ENCODE measurements at regions of chr1 and their contacts with region 1.

Region 1: GRCh38 chr1:156813750-156814570 is 2.7 kb downstream of the SH2D2A start:
- DNase-seq: peak; percentile 65
- H3K4me3 Mint-ChIP-seq: peak overlapping the region; percentile 73
- H3K27ac Mint-ChIP-seq: peak overlapping the region; percentile 27
- H3K4me1 Mint-ChIP-seq: peaks cover 48% of the 10 kb centered on the region
- H3K27me3 Mint-ChIP-seq: no peaks in the 10 kb centered on the region
- CTCF ChIP-seq: peak; percentile 55

Region 2: GRCh38 chr1:156833603-156834002 is 19.6 kb after region 1 on chr1:
- CTCF ChIA-PET with region 1: interaction called, 45 read pairs
- POLR2A ChIA-PET with region 1: interaction called, 3 read pairs
- intact Hi-C with region 1: no loop called
- DNase-seq: no peak
- H3K4me3 Mint-ChIP-seq: no peak overlapping the region
- H3K27ac Mint-ChIP-seq: no peak overlapping the region
- H3K4me1 Mint-ChIP-seq: no peaks in the 10 kb centered on the region
- H3K27me3 Mint-ChIP-seq: peaks cover 54% of the 10 kb centered on the region
- CTCF ChIP-seq: no peak

Region 3: DNA sequence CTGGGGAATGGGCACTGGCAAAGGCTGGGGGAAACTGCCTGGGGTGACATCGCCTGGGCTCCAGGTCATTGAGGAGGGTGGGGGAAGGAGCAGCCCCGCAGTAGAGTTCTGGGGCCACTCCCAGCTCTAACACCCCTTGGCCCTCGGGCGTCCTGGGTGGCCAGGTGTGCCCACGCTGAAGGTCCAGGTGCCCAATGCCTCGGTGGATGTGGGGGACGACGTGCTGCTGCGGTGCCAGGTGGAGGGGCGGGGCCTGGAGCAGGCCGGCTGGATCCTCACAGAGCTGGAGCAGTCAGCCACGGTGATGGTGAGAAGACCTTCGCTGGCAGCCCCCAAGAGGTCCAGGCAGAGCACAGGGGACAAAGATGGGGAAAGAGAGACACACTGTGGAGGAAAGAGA is 54.4 kb after region 1 on chr1:
- CTCF ChIA-PET with region 1: no interaction called
- POLR2A ChIA-PET with region 1: no interaction called
- intact Hi-C with region 1: no loop called
- DNase-seq: no peak
- H3K4me3 Mint-ChIP-seq: no peak overlapping the region
- H3K27ac Mint-ChIP-seq: no peak overlapping the region
- H3K4me1 Mint-ChIP-seq: peaks cover 18% of the 10 kb centered on the region
- H3K27me3 Mint-ChIP-seq: peaks cover 10% of the 10 kb centered on the region
- CTCF ChIP-seq: no peak

Measured in MCF 10A (cell line).